ENCODE measurements at regions of chr3 and their contacts with region 1.

Region 1: DNA sequence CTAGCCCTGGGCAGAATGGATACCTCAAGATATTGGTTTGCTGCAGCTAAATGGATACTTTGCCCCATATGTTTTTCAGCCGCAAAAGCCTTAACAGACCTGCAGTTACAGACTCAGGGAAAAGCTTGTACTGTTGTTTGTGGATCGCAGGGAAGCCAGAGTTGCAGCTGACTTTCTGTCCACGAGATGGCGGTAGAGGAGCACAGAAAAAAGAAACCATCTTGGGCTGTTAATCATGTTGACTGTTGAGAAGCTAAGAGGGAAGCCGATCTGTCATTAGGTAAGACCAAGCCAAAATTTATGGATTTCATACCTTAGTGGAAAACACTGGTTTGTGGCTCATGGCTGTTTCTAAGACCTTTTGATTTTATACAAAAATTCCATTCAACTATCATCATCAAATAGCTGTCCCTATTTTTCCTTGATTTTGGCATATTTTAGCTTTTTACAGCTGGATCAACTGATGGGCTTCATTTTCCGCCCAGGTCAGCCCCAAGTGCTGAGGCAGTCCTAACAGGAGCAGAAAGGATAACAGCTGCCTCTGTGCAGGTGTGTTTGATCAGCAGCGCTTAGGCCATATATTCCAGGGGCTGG is 205.7 kb upstream of the ZPLD1 start:
- DNase-seq: peak; percentile 87
- ATAC-seq: peak; percentile 53
- H3K4me3 ChIP-seq: no peak overlapping the region
- H3K4me3 Mint-ChIP-seq: no peak overlapping the region
- H3K27ac ChIP-seq: no peak overlapping the region
- H3K27ac Mint-ChIP-seq: no peak overlapping the region
- H3K4me1 ChIP-seq: peaks cover 22 to 28% of the 10 kb centered on the region in 2 donors
- H3K4me1 Mint-ChIP-seq: peaks cover 36% of the 10 kb centered on the region
- H3K27me3 ChIP-seq: no peaks in the 10 kb centered on the region
- H3K27me3 Mint-ChIP-seq: peaks cover 3% of the 10 kb centered on the region
- CTCF ChIP-seq: peak; percentile 90

Region 2: DNA sequence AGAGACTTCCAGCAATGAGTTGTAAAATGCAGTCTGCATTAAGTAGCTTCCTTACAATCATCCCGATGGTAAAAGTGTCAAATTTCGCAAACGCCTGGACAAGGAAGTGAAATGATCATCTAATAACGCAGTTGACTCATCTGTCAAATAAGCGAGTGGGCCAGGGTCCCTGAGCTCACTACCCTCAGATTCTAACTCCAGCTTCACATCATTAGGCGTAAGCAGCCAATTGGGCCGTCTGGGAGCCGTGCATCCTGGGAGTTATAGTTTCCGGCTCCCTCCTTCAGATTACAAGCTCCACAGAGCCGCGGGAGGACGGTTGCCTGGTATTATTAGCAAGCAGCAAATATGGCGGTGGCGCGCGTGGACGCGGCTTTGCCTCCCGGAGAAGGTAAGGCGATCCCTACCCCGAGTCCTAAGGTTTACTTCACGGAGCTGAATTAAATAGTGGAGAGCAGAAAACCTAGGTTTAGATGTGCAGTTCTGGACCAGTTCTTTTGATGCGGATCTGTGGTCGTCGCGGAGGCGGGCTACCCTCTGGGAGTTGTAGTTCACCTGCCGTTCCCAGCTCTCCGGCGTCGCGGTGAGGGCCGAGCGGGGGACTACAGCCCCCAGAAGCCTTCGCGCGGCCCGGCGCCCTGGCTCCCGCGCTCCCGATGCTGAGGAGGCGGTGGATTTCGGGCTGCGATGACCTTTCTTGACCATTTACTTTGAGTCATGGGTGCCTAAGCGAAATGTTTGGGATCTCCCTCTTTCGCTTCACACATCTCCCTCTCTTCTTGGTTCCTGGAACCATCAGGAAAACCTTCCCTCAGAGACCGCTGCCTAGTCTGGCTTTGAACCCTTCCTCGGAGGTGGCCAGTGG is 504.6 kb before region 1 on chr3 and contains the start of gene CEP97:
- CTCF ChIA-PET with region 1: interaction called, 10 read pairs
- POLR2A ChIA-PET with region 1: no interaction called
- intact Hi-C with region 1: no loop called
- DNase-seq: peak; percentile 91
- ATAC-seq: peak; percentile 93
- H3K4me3 ChIP-seq: peak within 1 kb of the TSS; percentile 77 to 99 (median 84)
- H3K4me3 Mint-ChIP-seq: peak within 1 kb of the TSS; percentile 100
- H3K27ac ChIP-seq: peak within 1 kb of the TSS; percentile 70 to 74
- H3K27ac Mint-ChIP-seq: peak within 1 kb of the TSS; percentile 99
- H3K4me1 ChIP-seq: peaks cover 30 to 34% of the 10 kb centered on the region in 2 donors
- H3K4me1 Mint-ChIP-seq: peaks cover 37% of the 10 kb centered on the region
- H3K27me3 ChIP-seq: no peaks in the 10 kb centered on the region
- H3K27me3 Mint-ChIP-seq: no peaks in the 10 kb centered on the region
- CTCF ChIP-seq: no peak
- total RNA-seq, gene CEP97: 15.0 and 15.4 TPM in 2 replicates

Region 3: DNA sequence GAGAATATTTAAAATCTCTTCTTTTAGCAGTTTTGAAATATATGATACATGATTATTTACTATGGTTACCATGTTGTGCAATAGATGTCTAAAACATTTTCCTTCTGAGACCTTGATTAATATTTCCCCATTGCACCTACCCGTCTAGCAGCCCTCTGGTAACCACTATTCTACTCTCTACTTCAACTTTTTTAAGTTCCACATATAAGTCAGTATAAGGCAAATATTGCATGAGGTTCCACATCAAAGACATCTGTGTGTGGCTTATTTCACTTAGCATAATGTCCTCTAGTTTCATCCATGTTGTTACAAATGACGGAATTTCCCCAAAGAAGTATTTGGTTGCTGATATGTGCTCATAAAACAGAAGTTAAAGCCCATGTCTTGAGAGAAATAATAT is 409.4 kb before region 1 on chr3:
- CTCF ChIA-PET with region 1: interaction called, 1,306 read pairs
- POLR2A ChIA-PET with region 1: no interaction called
- intact Hi-C with region 1: no loop called
- DNase-seq: peak; percentile 43
- ATAC-seq: no peak
- H3K4me3 ChIP-seq: no peak overlapping the region
- H3K4me3 Mint-ChIP-seq: no peak overlapping the region
- H3K27ac ChIP-seq: no peak overlapping the region
- H3K27ac Mint-ChIP-seq: peak overlapping the region; percentile 20
- H3K4me1 ChIP-seq: peaks cover 33 to 37% of the 10 kb centered on the region in 2 donors
- H3K4me1 Mint-ChIP-seq: peaks cover 42% of the 10 kb centered on the region
- H3K27me3 ChIP-seq: no peaks in the 10 kb centered on the region
- H3K27me3 Mint-ChIP-seq: no peaks in the 10 kb centered on the region
- CTCF ChIP-seq: no peak

Region 4: DNA sequence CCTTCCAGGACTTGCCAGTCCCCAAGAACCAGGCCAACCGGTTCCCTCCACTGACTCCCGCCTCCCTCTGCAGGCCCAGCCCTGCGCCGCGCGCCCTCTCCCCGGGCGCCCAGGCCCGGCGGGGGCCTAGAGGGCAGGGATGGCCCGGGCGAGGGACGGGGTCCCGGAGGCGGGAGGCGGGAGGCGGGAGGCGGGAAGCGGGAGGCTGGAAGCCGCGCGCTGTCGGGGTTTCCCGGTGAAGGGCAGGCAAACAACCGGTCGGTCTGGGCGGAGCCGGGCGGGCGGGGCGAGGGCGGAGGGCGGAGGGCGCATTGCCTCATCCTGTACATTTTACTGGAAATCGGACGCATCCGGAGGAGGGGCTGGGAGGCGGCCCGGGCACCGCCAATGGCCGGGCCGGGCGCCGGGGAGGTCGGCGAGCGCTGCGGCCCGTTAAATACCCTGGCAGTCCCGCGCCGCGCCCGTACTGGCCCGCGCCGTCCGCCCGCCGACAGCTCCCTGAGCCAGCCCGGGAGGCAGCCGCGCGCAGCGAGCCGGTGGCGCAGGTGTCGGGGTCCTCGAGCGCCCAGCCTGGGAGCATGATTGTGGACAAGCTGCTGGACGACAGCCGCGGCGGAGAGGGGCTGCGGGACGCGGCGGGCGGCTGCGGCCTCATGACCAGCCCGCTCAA is 380.0 kb before region 1 on chr3 and contains the start of gene NFKBIZ:
- CTCF ChIA-PET with region 1: interaction called, 57 read pairs
- POLR2A ChIA-PET with region 1: interaction called, 4 read pairs
- intact Hi-C with region 1: no loop called
- DNase-seq: peak; percentile 92
- ATAC-seq: peak; percentile 82
- H3K4me3 ChIP-seq: peak within 1 kb of the TSS; percentile 87 to 100 (median 94)
- H3K4me3 Mint-ChIP-seq: peak within 1 kb of the TSS; percentile 99
- H3K27ac ChIP-seq: peak within 1 kb of the TSS; percentile 84 to 92
- H3K27ac Mint-ChIP-seq: peak within 1 kb of the TSS; percentile 96
- H3K4me1 ChIP-seq: peaks cover 18 to 36% of the 10 kb centered on the region in 2 donors
- H3K4me1 Mint-ChIP-seq: peaks cover 50% of the 10 kb centered on the region
- H3K27me3 ChIP-seq: no peaks in the 10 kb centered on the region
- H3K27me3 Mint-ChIP-seq: no peaks in the 10 kb centered on the region
- CTCF ChIP-seq: no peak
- total RNA-seq, gene NFKBIZ: 141 and 157 TPM in 2 replicates

Region 5: DNA sequence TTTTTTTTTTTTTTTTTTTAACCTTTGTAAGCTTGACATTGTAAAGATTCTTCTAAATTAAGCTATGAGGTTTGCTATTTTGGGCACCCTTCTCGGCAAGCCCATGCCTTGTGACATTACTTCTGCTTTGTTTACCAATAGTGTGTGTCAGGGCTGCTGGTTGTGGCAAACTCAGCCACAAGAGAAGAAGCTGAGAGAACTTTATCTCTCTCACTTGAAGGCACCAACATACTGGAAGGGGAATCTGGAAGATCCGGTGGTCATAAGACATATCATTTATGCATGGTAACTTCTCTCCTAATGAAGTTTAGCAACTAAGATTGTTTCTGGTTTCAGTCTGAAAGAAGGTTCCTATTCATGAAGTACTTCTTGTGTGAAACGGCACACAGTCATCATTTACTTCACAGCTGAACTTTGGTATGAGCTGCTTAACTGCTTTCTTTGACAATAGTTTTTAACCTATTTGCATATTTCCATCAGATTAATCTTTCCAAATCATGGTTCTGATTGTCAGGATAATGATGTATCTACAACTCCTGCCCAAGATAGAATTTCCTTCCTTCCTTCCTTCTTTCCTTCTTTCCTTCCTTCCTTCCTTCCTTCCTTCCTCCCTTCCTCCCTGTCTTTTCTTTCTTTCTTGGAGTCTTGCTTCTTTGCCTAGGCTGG is 190.5 kb before region 1 on chr3:
- CTCF ChIA-PET with region 1: interaction called, 14 read pairs
- POLR2A ChIA-PET with region 1: no interaction called
- intact Hi-C with region 1: no loop called
- DNase-seq: peak; percentile 66
- ATAC-seq: peak; percentile 66
- H3K4me3 ChIP-seq: peak overlapping the region in 1 of 5 experiments; percentile 35
- H3K4me3 Mint-ChIP-seq: peak overlapping the region; percentile 49
- H3K27ac ChIP-seq: peak overlapping the region; percentile 51 to 79
- H3K27ac Mint-ChIP-seq: peak overlapping the region; percentile 87
- H3K4me1 ChIP-seq: peaks cover 28 to 34% of the 10 kb centered on the region in 2 donors
- H3K4me1 Mint-ChIP-seq: peaks cover 41% of the 10 kb centered on the region
- H3K27me3 ChIP-seq: no peaks in the 10 kb centered on the region
- H3K27me3 Mint-ChIP-seq: no peaks in the 10 kb centered on the region
- CTCF ChIP-seq: no peak

Region 6: GRCh38 chr3:102248981-102249705 is 20.0 kb after region 1 on chr3:
- CTCF ChIA-PET with region 1: interaction called, 12 read pairs
- POLR2A ChIA-PET with region 1: no interaction called
- intact Hi-C with region 1: no loop called
- DNase-seq: no peak
- ATAC-seq: no peak
- H3K4me3 ChIP-seq: no peak overlapping the region
- H3K4me3 Mint-ChIP-seq: no peak overlapping the region
- H3K27ac ChIP-seq: no peak overlapping the region
- H3K27ac Mint-ChIP-seq: no peak overlapping the region
- H3K4me1 ChIP-seq: no peaks in the 10 kb centered on the region
- H3K4me1 Mint-ChIP-seq: no peaks in the 10 kb centered on the region
- H3K27me3 ChIP-seq: peaks cover 0 to 3% (median 0%) of the 10 kb centered on the region in 4 experiments
- H3K27me3 Mint-ChIP-seq: peaks cover 35% of the 10 kb centered on the region
- CTCF ChIP-seq: no peak

Region 7: DNA sequence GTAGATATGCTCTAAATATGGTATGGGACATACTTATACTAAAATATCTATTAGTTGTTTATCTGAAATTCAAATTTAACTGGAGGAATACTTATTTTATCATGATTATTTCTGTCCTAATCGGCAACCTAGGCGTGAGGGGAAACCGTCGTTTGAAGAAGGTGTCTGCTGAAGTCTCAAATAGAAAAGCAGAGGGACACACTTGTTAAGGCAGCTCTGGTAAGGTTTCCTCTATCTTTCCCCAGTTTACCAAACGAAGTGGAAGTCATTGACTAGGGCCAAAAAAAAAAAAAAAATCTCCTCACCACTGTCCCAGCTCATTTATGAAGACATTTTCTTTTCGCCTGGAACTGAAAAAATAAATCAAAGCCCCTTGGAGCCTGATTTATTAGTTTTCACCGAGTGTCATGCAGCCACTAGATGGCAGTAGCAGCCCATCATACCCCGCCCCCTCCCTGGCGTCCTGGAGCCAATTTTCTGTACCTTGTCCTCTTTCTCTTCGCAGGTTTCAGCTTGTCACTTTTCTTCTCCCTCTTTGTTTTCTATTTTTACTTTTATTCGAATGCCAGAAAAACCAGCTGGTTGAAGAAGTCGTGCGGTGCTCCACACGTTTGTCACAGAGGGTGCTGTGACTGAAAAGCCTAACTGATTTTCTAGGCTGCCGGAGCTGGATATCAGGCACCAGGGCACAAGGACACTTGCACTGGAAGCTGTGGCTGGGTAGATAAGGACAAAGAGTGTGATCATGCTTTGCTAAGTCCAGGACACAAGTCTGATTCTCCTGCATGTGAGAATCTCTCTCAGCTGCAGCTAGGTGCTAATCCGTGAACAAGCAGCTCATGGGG is 444.3 kb after region 1 on chr3:
- CTCF ChIA-PET with region 1: interaction called, 36 read pairs
- POLR2A ChIA-PET with region 1: no interaction called
- intact Hi-C with region 1: loop called (anchors 2 kb)
- DNase-seq: peak; percentile 58
- ATAC-seq: no peak
- H3K4me3 ChIP-seq: no peak overlapping the region
- H3K4me3 Mint-ChIP-seq: no peak overlapping the region
- H3K27ac ChIP-seq: no peak overlapping the region
- H3K27ac Mint-ChIP-seq: no peak overlapping the region
- H3K4me1 ChIP-seq: peaks cover 0 to 6% of the 10 kb centered on the region in 2 donors
- H3K4me1 Mint-ChIP-seq: peaks cover 2% of the 10 kb centered on the region
- H3K27me3 ChIP-seq: no peaks in the 10 kb centered on the region
- H3K27me3 Mint-ChIP-seq: peaks cover 8% of the 10 kb centered on the region
- CTCF ChIP-seq: peak; percentile 90